Mammary epithelial cell (primary cell): ENCODE measurements at regions of chr19 and their contacts with region 1.

Region 1: GRCh38 chr19:3108775-3109174 is 14.6 kb downstream of the GNA11 start:
- DNase-seq: peak; percentile 36
- H3K4me3 ChIP-seq: no peak overlapping the region
- H3K27ac ChIP-seq: no peak overlapping the region
- H3K4me1 ChIP-seq: no peaks in the 10 kb centered on the region
- H3K27me3 ChIP-seq: no peaks in the 10 kb centered on the region
- CTCF ChIP-seq: peak; percentile 73 to 83

Region 2: GRCh38 chr19:2811735-2812406 is 296.9 kb before region 1 on chr19:
- CTCF ChIA-PET with region 1: no interaction called
- dilution Hi-C with region 1: no loop called
- in situ Hi-C with region 1: no loop called
- intact Hi-C with region 1: no loop called
- DNase-seq: no peak
- H3K4me3 ChIP-seq: no peak overlapping the region
- H3K27ac ChIP-seq: no peak overlapping the region
- H3K4me1 ChIP-seq: no peaks in the 10 kb centered on the region
- H3K27me3 ChIP-seq: no peaks in the 10 kb centered on the region
- CTCF ChIP-seq: no peak

Region 3: GRCh38 chr19:2824133-2824532 is 284.6 kb before region 1 on chr19:
- CTCF ChIA-PET with region 1: no interaction called
- dilution Hi-C with region 1: no loop called
- in situ Hi-C with region 1: no loop called
- intact Hi-C with region 1: no loop called
- DNase-seq: no peak
- H3K4me3 ChIP-seq: no peak overlapping the region
- H3K27ac ChIP-seq: no peak overlapping the region
- H3K4me1 ChIP-seq: no peaks in the 10 kb centered on the region
- H3K27me3 ChIP-seq: no peaks in the 10 kb centered on the region
- CTCF ChIP-seq: no peak

Region 4: GRCh38 chr19:2887391-2887914 is 221.3 kb before region 1 on chr19:
- CTCF ChIA-PET with region 1: no interaction called
- dilution Hi-C with region 1: no loop called
- in situ Hi-C with region 1: no loop called
- intact Hi-C with region 1: loop called (anchors 10 kb)
- DNase-seq: peak; percentile 66
- H3K4me3 ChIP-seq: peak overlapping the region in 2 of 3 experiments; percentile 19 to 35
- H3K27ac ChIP-seq: no peak overlapping the region
- H3K4me1 ChIP-seq: no peaks in the 10 kb centered on the region
- H3K27me3 ChIP-seq: no peaks in the 10 kb centered on the region
- CTCF ChIP-seq: peak; percentile 66 to 68

Region 5: DNA sequence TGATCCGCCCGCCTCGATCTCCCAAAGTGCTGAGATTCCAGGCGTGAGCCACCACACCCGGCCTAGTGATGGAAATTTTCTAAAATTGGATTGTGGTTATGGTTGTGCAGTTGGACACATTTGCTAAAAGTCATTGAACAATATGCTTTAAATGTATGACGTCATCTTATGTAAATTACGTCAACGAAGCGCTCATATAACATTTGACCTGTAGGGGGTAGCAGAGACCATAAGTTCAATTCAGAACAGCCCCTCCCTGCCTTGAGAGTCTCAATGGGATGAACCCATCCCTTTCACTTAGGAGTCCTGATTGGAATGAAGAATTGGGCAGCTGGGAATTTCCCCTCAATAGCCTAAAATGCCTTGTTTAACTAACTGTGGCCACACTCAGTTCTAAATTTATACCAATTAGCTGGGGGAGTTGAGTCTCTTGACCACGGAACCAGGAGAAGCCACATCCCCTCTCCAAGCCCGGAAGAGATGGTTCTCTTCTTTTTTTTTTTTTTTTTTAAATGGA is 146.7 kb before region 1 on chr19:
- CTCF ChIA-PET with region 1: interaction called, 4 read pairs
- dilution Hi-C with region 1: no loop called
- in situ Hi-C with region 1: loop called (anchors 10 kb)
- intact Hi-C with region 1: loop called (anchors 1 kb)
- DNase-seq: peak; percentile 38
- H3K4me3 ChIP-seq: no peak overlapping the region
- H3K27ac ChIP-seq: no peak overlapping the region
- H3K4me1 ChIP-seq: no peaks in the 10 kb centered on the region
- H3K27me3 ChIP-seq: no peaks in the 10 kb centered on the region
- CTCF ChIP-seq: peak; percentile 45 to 66

Region 6: DNA sequence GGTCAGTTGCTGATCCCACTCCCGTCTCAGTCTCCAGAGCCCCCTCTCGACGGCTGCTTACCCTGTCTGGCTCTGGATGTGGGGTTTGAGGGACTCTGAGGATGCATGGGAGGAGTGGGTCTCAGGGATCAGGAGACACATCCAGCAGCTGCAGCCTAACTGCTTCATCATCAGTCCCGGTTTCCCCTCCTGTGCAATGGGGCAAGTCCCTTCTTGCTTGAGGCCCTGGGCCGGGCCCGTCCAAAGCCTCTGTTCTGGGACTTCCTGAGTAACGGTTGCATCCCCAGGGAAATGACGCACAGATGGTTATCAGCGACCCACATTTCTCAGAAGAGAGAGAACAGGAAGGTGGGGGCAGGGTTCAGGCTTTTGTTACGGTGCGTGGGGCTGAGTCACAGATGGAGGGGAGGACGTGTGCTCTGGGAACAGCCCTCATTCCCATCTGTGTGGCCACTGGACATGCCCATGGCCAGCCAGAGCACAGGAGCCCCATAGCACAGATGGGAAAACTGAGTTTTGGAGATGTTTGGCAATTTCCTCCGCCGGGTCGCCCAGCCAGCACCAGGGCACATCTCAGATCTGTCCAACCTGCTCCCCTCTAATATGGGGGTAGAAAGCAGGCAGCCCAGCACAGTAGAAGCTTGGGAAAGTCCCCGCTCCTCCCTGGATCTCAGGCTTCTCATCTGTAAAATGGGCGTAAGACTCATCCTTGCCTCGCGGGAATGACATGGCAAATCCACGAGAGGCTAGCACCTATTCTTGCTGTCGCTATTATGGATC is 46.4 kb after region 1 on chr19:
- CTCF ChIA-PET with region 1: no interaction called
- dilution Hi-C with region 1: no loop called
- in situ Hi-C with region 1: no loop called
- intact Hi-C with region 1: no loop called
- DNase-seq: peak; percentile 100
- H3K4me3 ChIP-seq: peak overlapping the region in 1 of 3 experiments; percentile 22
- H3K27ac ChIP-seq: peak overlapping the region; percentile 96
- H3K4me1 ChIP-seq: peaks cover 31% of the 10 kb centered on the region
- H3K27me3 ChIP-seq: no peaks in the 10 kb centered on the region
- CTCF ChIP-seq: no peak